ENCODE measurements at regions of chr3 and their contacts with region 1.

Region 1: GRCh38 chr3:46976326-46977190 is at the start of gene CCDC12:
- DNase-seq: peak; percentile 94 to 98
- H3K4me3 ChIP-seq: peak within 1 kb of the TSS; percentile 98
- H3K4me3 Mint-ChIP-seq: peak within 1 kb of the TSS; percentile 91
- H3K27ac Mint-ChIP-seq: peak within 1 kb of the TSS; percentile 98
- H3K4me1 ChIP-seq: peaks cover 47% of the 10 kb centered on the region
- H3K4me1 Mint-ChIP-seq: peaks cover 20% of the 10 kb centered on the region
- H3K27me3 ChIP-seq: no peaks in the 10 kb centered on the region
- H3K27me3 Mint-ChIP-seq: no peaks in the 10 kb centered on the region
- CTCF ChIP-seq: no peak
- total RNA-seq, gene CCDC12: 52.7 and 60.8 TPM in 2 replicates

Region 2: DNA sequence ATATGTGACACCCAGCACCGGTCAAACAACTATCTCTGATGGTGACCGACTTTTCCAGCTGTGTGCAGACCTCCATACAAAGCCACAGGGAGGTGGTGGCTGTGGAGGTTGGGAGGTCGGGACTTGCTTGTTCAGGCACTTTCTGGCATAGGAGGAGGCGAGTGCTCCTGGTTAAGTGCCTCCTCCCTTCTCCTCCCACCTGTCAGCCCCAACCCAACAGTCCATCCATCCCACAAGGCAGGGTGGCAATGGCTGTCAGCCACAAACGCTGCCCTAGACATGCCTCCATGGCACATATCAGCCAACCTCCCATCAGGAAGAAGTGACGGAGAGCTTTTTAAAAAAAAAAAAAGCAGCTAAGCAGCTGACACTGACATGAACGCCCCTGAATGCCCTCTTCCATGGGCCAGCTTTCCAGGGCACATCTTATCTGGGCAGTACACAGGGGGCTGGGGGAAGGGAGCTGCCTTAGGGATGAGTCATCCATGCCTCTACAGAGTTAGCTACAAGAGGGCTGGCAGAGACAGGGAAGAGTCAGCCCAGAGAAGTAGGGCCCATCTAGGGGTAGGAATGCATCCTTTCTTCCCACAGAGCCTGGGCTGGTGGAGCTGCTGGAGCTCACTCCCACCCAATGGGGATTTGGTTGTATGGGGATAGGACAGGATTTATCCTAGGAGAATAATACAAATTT is 41.2 kb before region 1 on chr3:
- CTCF ChIA-PET with region 1: interaction called, 7 read pairs
- POLR2A ChIA-PET with region 1: interaction called, 29 read pairs
- intact Hi-C with region 1: loop called (anchors 1 kb)
- DNase-seq: peak; percentile 84 to 90
- H3K4me3 ChIP-seq: no peak overlapping the region
- H3K4me3 Mint-ChIP-seq: peak overlapping the region; percentile 24
- H3K27ac Mint-ChIP-seq: peak overlapping the region; percentile 69
- H3K4me1 ChIP-seq: peaks cover 82% of the 10 kb centered on the region
- H3K4me1 Mint-ChIP-seq: peaks cover 56% of the 10 kb centered on the region
- H3K27me3 ChIP-seq: no peaks in the 10 kb centered on the region
- H3K27me3 Mint-ChIP-seq: no peaks in the 10 kb centered on the region
- CTCF ChIP-seq: peak; percentile 35 to 70

Region 3: GRCh38 chr3:46947981-46948791 is 28.4 kb before region 1 on chr3:
- CTCF ChIA-PET with region 1: interaction called, 5 read pairs
- POLR2A ChIA-PET with region 1: interaction called, 6 read pairs
- intact Hi-C with region 1: loop called (anchors 1 kb)
- DNase-seq: peak; percentile 90 to 96
- H3K4me3 ChIP-seq: no peak overlapping the region
- H3K4me3 Mint-ChIP-seq: peak overlapping the region; percentile 57
- H3K27ac Mint-ChIP-seq: peak overlapping the region; percentile 95
- H3K4me1 ChIP-seq: peaks cover 64% of the 10 kb centered on the region
- H3K4me1 Mint-ChIP-seq: peaks cover 65% of the 10 kb centered on the region
- H3K27me3 ChIP-seq: no peaks in the 10 kb centered on the region
- H3K27me3 Mint-ChIP-seq: no peaks in the 10 kb centered on the region
- CTCF ChIP-seq: no peak

Region 4: GRCh38 chr3:46959161-46959511 is 17.4 kb before region 1 on chr3:
- CTCF ChIA-PET with region 1: interaction called, 5 read pairs
- POLR2A ChIA-PET with region 1: interaction called, 14 read pairs
- intact Hi-C with region 1: no loop called
- DNase-seq: no peak
- H3K4me3 ChIP-seq: no peak overlapping the region
- H3K4me3 Mint-ChIP-seq: no peak overlapping the region
- H3K27ac Mint-ChIP-seq: peak overlapping the region; percentile 73
- H3K4me1 ChIP-seq: peaks cover 76% of the 10 kb centered on the region
- H3K4me1 Mint-ChIP-seq: peaks cover 54% of the 10 kb centered on the region
- H3K27me3 ChIP-seq: no peaks in the 10 kb centered on the region
- H3K27me3 Mint-ChIP-seq: no peaks in the 10 kb centered on the region
- CTCF ChIP-seq: no peak

Region 5: GRCh38 chr3:46998121-46998851 is 21.7 kb after region 1 on chr3:
- CTCF ChIA-PET with region 1: interaction called, 4 read pairs
- POLR2A ChIA-PET with region 1: no interaction called
- intact Hi-C with region 1: loop called (anchors 2 kb)
- DNase-seq: peak; percentile 69 to 84
- H3K4me3 ChIP-seq: no peak overlapping the region
- H3K4me3 Mint-ChIP-seq: no peak overlapping the region
- H3K27ac Mint-ChIP-seq: no peak overlapping the region
- H3K4me1 ChIP-seq: peaks cover 11% of the 10 kb centered on the region
- H3K4me1 Mint-ChIP-seq: peaks cover 6% of the 10 kb centered on the region
- H3K27me3 ChIP-seq: no peaks in the 10 kb centered on the region
- H3K27me3 Mint-ChIP-seq: no peaks in the 10 kb centered on the region
- CTCF ChIP-seq: peak; percentile 76 to 85

Region 6: DNA sequence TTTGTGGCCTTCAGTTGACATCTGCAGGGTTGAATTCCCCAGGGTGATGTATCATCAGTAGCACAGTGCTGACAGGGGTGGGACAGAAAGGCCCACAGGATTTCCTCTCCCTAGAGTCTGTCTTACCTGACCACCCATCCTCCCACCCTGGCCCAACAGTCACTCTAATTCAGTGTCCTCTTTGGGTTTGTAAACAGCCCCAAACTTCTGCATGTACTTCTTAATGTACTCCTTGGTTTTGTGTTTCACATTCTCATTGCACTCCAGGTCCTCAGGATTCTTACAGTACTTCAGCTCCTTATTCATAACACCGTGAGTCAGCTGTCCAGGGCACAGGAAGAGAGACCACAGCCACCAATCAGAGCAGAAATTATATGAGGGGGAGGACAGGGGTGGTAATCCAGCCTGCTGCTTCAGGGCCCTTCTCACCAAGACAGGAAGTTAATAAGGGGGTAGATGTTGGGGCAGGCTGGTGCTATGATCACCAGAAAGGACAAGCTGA is 40.4 kb after region 1 on chr3:
- CTCF ChIA-PET with region 1: no interaction called
- POLR2A ChIA-PET with region 1: no interaction called
- intact Hi-C with region 1: no loop called
- DNase-seq: no peak
- H3K4me3 ChIP-seq: no peak overlapping the region
- H3K4me3 Mint-ChIP-seq: no peak overlapping the region
- H3K27ac Mint-ChIP-seq: no peak overlapping the region
- H3K4me1 ChIP-seq: 0 out of 2 replicates have a peak, but pooled peaks cover 9% of the 10 kb centered on the region
- H3K4me1 Mint-ChIP-seq: no peaks in the 10 kb centered on the region
- H3K27me3 ChIP-seq: no peaks in the 10 kb centered on the region
- H3K27me3 Mint-ChIP-seq: no peaks in the 10 kb centered on the region
- CTCF ChIP-seq: no peak

Region 7: GRCh38 chr3:47380601-47381316 is 404.2 kb after region 1 on chr3 and contains the start of gene PTPN23:
- CTCF ChIA-PET with region 1: no interaction called
- POLR2A ChIA-PET with region 1: interaction called, 11 read pairs
- intact Hi-C with region 1: no loop called
- DNase-seq: peak; percentile 98 to 99
- H3K4me3 ChIP-seq: peak within 1 kb of the TSS; percentile 76
- H3K4me3 Mint-ChIP-seq: peak within 1 kb of the TSS; percentile 89
- H3K27ac Mint-ChIP-seq: peak within 1 kb of the TSS; percentile 97
- H3K4me1 ChIP-seq: peaks cover 25% of the 10 kb centered on the region
- H3K4me1 Mint-ChIP-seq: peaks cover 25% of the 10 kb centered on the region
- H3K27me3 ChIP-seq: no peaks in the 10 kb centered on the region
- H3K27me3 Mint-ChIP-seq: no peaks in the 10 kb centered on the region
- CTCF ChIP-seq: no peak
- total RNA-seq, gene PTPN23: 46.8 and 49.6 TPM in 2 replicates

Measured in Caco-2 (cell line).